ENCODE measurements at regions of chr2 and their contacts with region 1.

Region 1: DNA sequence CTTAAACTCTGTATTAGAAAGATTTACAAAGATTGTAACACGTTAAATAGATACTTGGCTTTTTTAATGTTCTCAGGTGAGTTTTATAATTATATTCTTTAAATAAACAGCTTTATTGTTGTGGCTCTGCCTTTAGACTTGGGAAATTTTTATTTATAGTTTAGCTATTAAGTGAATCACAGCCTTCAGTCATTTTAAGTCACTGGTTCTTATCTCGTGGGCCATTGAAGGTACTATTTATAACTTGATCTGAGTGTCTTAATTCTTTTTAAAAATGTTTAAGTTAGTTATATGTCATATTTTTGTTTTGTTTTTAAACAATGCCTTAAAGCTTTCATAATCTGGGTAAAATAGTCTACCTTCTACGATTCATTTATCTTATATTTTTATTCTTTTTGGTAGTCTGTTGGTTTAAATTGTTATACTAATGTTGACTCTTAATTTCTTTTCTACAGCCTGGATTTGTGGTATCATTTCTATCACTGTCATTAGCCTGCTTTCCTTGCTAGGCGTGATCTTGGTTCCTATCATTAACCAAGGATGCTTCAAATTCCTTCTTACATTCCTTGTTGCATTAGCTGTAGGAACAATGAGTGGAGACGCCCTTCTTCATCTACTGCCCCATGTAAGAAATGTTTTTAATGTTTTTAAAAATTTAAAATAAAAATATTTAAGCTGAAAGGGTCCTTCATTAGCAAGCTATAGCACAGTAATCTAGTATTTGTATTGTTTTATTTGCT is 49.3 kb downstream of the SLC39A10 start:
- DNase-seq: no peak
- H3K4me3 Mint-ChIP-seq: no peak overlapping the region
- H3K27ac Mint-ChIP-seq: no peak overlapping the region
- H3K4me1 Mint-ChIP-seq: peaks cover 12% of the 10 kb centered on the region
- H3K27me3 Mint-ChIP-seq: no peaks in the 10 kb centered on the region
- CTCF ChIP-seq: no peak

Region 2: DNA sequence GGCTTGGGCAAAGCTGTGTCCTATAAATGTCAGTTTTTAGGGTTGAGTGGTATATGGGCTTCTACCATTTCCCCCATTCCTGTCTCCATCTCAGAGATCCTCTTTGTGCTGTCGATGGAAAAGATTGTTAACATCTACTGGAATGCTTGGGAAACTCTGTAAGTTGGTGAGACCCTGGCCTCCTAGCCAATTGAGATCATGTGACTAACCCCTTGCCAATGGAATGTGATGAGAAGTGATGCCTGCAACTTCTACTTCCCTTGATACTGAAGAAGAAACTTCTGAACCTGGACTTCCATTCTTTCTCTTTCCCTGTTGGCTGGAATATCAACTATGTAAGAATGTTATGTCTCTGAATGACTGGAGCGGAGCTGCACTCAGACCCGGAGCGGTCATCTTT is 34.8 kb before region 1 on chr2:
- CTCF ChIA-PET with region 1: no interaction called
- POLR2A ChIA-PET with region 1: interaction called, 3 read pairs
- intact Hi-C with region 1: loop called (anchors 1 kb)
- DNase-seq: no peak
- H3K4me3 Mint-ChIP-seq: no peak overlapping the region
- H3K27ac Mint-ChIP-seq: no peak overlapping the region
- H3K4me1 Mint-ChIP-seq: peaks cover 10% of the 10 kb centered on the region
- H3K27me3 Mint-ChIP-seq: no peaks in the 10 kb centered on the region
- CTCF ChIP-seq: no peak

Measured in MCF 10A (cell line).